ENCODE measurements at regions of chr10 and their contacts with region 1.

Region 1: DNA sequence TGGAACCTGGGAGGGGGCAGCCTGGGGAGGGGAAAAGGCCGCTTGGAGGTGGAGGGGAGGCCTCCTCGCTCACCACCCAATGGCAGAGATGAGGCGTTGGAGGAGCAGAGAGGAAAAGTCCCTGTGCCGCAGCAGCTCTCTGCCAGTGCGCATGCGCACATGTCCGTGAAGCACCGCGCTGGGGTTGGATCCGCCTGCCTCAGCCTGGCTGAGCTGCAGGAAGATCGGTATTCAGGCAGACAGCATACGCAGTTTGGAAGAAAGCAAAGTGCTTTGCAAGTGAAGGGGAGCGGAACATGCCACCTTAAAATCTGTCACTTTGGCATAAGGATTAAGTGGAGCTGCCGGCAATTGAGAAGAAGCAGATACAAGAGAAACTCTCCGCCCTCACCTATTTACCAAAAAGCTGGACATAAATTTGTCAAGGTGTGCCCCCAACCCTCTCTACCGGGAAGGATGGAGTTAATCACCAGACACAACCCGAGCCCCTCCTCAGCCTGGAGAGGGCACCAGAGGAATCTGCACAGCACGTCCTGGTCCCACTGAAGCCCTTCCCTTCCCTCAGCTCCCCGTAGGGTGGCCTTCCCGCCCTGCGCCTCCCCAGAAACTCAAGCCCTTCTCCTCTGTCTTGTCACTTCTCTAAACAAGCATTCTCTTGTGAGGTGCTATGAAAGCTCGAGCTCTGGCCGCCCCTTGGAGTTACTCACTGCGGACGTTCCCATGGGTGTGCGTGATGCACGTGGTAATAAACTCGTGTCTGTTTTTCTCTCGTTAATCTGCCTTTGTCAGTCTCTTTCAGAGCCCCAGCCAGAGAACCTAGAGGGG is 32.2 kb upstream of the TMEM72 start:
- DNase-seq: peak; percentile 94
- H3K4me3 Mint-ChIP-seq: peak overlapping the region; percentile 86
- H3K27ac Mint-ChIP-seq: peak overlapping the region; percentile 51
- H3K4me1 Mint-ChIP-seq: peaks cover 11% of the 10 kb centered on the region
- H3K27me3 Mint-ChIP-seq: peaks cover 5% of the 10 kb centered on the region

Region 2: GRCh38 chr10:44864637-44865288 is 14.2 kb before region 1 on chr10:
- intact Hi-C with region 1: loop called (anchors 2 kb)
- DNase-seq: peak; percentile 95
- H3K4me3 Mint-ChIP-seq: peak overlapping the region; percentile 92
- H3K27ac Mint-ChIP-seq: peak overlapping the region; percentile 50
- H3K4me1 Mint-ChIP-seq: peaks cover 15% of the 10 kb centered on the region
- H3K27me3 Mint-ChIP-seq: peaks cover 56% of the 10 kb centered on the region

Measured in activated CD4-positive, alpha-beta T cell treated with anti-CD3 and anti-CD28 coated beads, Interleukin-2, amount 10 ng/mL, durations not matched to agents 24 days and 14 days (primary cell).